ENCODE measurements at regions of chr13 and their contacts with region 1.

Region 1: GRCh38 chr13:52128714-52129700 is at the start of gene NEK5:
- DNase-seq: peak; percentile 25
- ATAC-seq: peak; percentile 93
- H3K4me3 ChIP-seq: peak within 1 kb of the TSS; percentile 54
- H3K27ac ChIP-seq: no peak within 1 kb of the TSS
- H3K4me1 ChIP-seq: no peaks in the 10 kb centered on the region
- H3K27me3 ChIP-seq: peaks cover 2% of the 10 kb centered on the region; the same call in 1 of the 2 replicates
- CTCF ChIP-seq: peak; percentile 71
- POLR2A ChIP-seq: no peak
- RAD21 ChIP-seq: peak; percentile 55
- total RNA-seq, gene NEK5: under 0.01 TPM in 1 of 2 replicates, not detected in the other

Region 2: DNA sequence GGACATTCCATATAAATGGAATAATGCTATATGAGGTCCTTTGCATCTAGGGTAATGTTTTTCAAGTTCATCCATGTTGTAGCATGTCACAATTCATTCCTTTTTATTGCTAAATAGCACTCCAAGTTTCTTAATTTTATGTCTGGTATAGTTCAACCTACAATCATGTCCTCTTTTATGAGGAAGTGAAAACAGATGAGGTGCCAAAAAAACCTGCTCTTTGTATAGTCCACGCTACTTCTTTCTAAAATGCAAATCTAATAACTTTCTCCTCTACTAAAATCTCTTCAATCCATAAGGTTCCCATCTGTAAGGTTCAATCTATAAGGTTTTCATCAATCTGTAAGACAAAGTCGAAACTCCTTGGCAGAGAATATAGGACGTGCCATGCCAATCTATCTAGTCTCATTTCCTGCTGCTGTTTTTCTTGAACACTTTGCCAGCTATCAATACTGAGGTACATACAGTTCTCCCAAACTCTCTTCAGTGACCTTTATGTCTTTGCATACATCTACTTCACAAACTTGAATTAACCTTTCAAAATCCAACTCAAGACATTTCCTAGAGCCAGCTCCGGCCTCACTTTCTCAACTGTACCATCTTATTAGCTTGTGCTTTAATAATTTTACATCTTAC is 709.9 kb before region 1 on chr13:
- CTCF ChIA-PET with region 1: no interaction called
- POLR2A ChIA-PET with region 1: no interaction called
- dilution Hi-C with region 1: no loop called
- in situ Hi-C with region 1: loop called (anchors 25 kb)
- intact Hi-C with region 1: no loop called
- DNase-seq: no peak
- ATAC-seq: no peak
- H3K4me3 ChIP-seq: no peak overlapping the region
- H3K27ac ChIP-seq: no peak overlapping the region
- H3K4me1 ChIP-seq: no peaks in the 10 kb centered on the region; the same call in 1 of the 2 replicates
- H3K27me3 ChIP-seq: no peaks in the 10 kb centered on the region
- CTCF ChIP-seq: no peak
- POLR2A ChIP-seq: no peak
- RAD21 ChIP-seq: no peak

Region 3: GRCh38 chr13:51583875-51584730 is 544.9 kb before region 1 on chr13 and contains the start of gene WDFY2:
- CTCF ChIA-PET with region 1: no interaction called
- POLR2A ChIA-PET with region 1: no interaction called
- dilution Hi-C with region 1: no loop called
- in situ Hi-C with region 1: no loop called
- intact Hi-C with region 1: loop called (anchors 10 kb)
- DNase-seq: peak; percentile 100
- ATAC-seq: peak; percentile 90
- H3K4me3 ChIP-seq: peak within 1 kb of the TSS; percentile 97
- H3K27ac ChIP-seq: peak within 1 kb of the TSS; percentile 81
- H3K4me1 ChIP-seq: peaks cover 5% of the 10 kb centered on the region
- H3K27me3 ChIP-seq: no peaks in the 10 kb centered on the region
- CTCF ChIP-seq: peak; percentile 31; the same call in 1 of the 2 replicates
- POLR2A ChIP-seq: peak; percentile 92
- RAD21 ChIP-seq: peak; percentile 29
- total RNA-seq, gene WDFY2: 4.3 and 6.7 TPM in 2 replicates

Region 4: DNA sequence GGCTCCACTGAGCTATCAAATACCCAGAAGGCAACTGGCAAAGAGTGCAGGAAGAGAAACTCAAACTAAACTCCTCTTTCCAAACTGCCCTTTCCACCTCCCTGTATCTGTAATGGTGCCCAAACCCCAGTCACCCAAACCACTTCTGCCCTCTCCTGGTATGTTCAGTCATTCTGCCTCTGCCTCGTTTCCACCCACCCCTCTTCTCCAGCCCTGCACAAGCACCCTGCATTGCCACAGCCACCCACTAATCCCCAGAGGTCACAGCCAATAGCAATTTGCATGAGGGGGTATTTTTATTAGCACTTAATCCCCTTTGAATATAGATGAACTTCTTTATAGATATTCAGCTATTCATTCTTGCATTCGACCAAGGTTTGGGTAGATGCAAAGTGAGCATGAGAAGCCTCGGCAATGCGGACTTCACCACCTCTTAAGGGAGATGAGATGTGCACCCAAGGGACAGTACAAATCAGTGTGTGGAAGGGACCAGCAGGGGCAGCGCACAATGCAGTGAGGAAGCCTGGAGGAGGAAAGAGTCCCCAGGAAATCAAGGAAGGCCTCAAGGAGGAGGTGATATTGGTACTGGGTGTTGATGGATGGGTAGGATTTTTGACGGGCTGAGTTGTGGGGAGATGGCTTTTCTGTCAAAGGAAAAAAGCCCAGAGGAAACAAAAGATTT is 296.4 kb before region 1 on chr13:
- CTCF ChIA-PET with region 1: no interaction called
- POLR2A ChIA-PET with region 1: no interaction called
- dilution Hi-C with region 1: no loop called
- in situ Hi-C with region 1: no loop called
- intact Hi-C with region 1: loop called (anchors 5 kb)
- DNase-seq: peak; percentile 8
- ATAC-seq: peak; percentile 70
- H3K4me3 ChIP-seq: no peak overlapping the region
- H3K27ac ChIP-seq: no peak overlapping the region
- H3K4me1 ChIP-seq: no peaks in the 10 kb centered on the region
- H3K27me3 ChIP-seq: peaks cover 52% of the 10 kb centered on the region
- CTCF ChIP-seq: peak; percentile 38
- POLR2A ChIP-seq: no peak
- RAD21 ChIP-seq: peak; percentile 55

Region 5: GRCh38 chr13:51865838-51866237 is 263.2 kb before region 1 on chr13:
- CTCF ChIA-PET with region 1: no interaction called
- POLR2A ChIA-PET with region 1: no interaction called
- dilution Hi-C with region 1: no loop called
- in situ Hi-C with region 1: no loop called
- intact Hi-C with region 1: no loop called
- DNase-seq: no peak
- ATAC-seq: no peak
- H3K4me3 ChIP-seq: no peak overlapping the region
- H3K27ac ChIP-seq: no peak overlapping the region
- H3K4me1 ChIP-seq: no peaks in the 10 kb centered on the region
- H3K27me3 ChIP-seq: peaks cover 24% of the 10 kb centered on the region
- CTCF ChIP-seq: no peak
- POLR2A ChIP-seq: no peak
- RAD21 ChIP-seq: no peak

Region 6: GRCh38 chr13:51895906-51896888 is 232.8 kb before region 1 on chr13:
- CTCF ChIA-PET with region 1: interaction called, 14 read pairs
- POLR2A ChIA-PET with region 1: no interaction called
- dilution Hi-C with region 1: no loop called
- in situ Hi-C with region 1: no loop called
- intact Hi-C with region 1: loop called (anchors 1 kb)
- DNase-seq: peak; percentile 61
- ATAC-seq: peak; percentile 96
- H3K4me3 ChIP-seq: no peak overlapping the region
- H3K27ac ChIP-seq: no peak overlapping the region
- H3K4me1 ChIP-seq: no peaks in the 10 kb centered on the region
- H3K27me3 ChIP-seq: peaks cover 24% of the 10 kb centered on the region
- CTCF ChIP-seq: peak; percentile 81
- POLR2A ChIP-seq: no peak
- RAD21 ChIP-seq: peak; percentile 75

Region 7: GRCh38 chr13:52070929-52071523 is 58.0 kb before region 1 on chr13:
- CTCF ChIA-PET with region 1: interaction called, 6 read pairs
- POLR2A ChIA-PET with region 1: no interaction called
- dilution Hi-C with region 1: no loop called
- in situ Hi-C with region 1: no loop called
- intact Hi-C with region 1: loop called (anchors 1 kb)
- DNase-seq: peak; percentile 32
- ATAC-seq: peak; percentile 32
- H3K4me3 ChIP-seq: no peak overlapping the region
- H3K27ac ChIP-seq: no peak overlapping the region
- H3K4me1 ChIP-seq: no peaks in the 10 kb centered on the region
- H3K27me3 ChIP-seq: no peaks in the 10 kb centered on the region
- CTCF ChIP-seq: peak; percentile 31; the same call in 1 of the 2 replicates
- POLR2A ChIP-seq: no peak
- RAD21 ChIP-seq: peak; percentile 16; the same call in 1 of the 2 replicates